Colonic mucosa (tissue), 4 donors: ENCODE measurements at regions of chr21 and their contacts with region 1.

Region 1: DNA sequence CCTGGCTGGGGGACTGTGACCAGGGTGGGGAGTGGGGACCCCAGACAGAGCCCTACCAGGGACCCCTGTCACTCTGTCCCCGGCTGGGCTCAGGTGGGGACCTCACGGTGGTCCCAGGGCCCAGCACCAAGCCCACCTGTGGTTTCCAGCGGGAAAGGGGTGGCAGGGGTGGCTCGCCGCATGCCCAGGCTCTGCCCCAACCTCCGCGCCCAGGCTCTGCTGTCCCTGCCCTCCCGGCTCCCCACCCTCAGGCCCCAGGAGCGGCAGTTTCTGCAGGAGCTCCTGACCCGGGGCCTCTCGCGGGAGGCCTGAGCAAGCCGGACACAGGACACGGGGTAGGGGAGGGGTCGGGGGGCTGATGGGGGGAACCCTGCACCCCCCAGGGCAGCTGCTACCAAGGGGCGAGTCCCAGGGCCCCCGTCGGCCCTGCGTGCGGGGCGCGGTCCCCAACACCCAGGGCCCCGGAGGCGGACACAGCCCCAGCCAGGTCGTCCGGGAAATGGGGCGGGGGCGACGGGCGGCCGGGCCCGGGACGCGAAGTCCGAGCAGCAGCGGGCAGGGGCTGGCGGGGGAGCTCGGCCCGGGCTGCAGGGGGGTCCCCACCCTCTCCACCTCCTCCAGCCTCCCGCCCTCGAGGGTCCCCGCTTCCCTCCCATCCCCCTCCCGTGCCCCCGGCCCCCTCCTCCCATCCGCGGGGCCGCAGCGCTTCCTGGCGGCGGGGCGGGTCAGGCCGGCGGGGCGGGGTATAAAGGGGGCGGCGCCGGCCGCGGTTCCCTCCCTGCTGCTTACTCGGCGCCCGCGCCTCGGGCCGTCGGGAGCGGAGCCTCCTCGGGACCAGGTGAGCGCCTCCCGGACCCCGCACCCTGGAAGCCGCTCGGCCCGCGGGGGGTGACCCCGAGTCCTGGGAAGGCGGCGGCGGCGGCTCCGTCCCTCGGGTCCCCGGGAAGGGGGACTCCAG is at the start of gene COL6A2:
- DNase-seq: peak; percentile 40
- H3K4me3 ChIP-seq: peak within 1 kb of the TSS; percentile 45
- H3K27ac ChIP-seq: peak within 1 kb of the TSS; percentile 75
- H3K4me1 ChIP-seq: no peaks in the 10 kb centered on the region
- H3K27me3 ChIP-seq: peaks cover 22% of the 10 kb centered on the region
- CTCF ChIP-seq: peak; percentile 16
- total RNA-seq, gene COL6A2: 55.7 to 190 TPM

Region 2: GRCh38 chr21:45880097-45881068 is 217.2 kb before region 1 on chr21:
- intact Hi-C with region 1: no loop called
- DNase-seq: peak; percentile 68
- H3K4me3 ChIP-seq: no peak overlapping the region
- H3K27ac ChIP-seq: no peak overlapping the region
- H3K4me1 ChIP-seq: no peaks in the 10 kb centered on the region
- H3K27me3 ChIP-seq: no peaks in the 10 kb centered on the region
- CTCF ChIP-seq: peak; percentile 66

Region 3: GRCh38 chr21:45981151-45982089 is 116.2 kb before region 1 on chr21 and contains the start of gene COL6A1:
- intact Hi-C with region 1: loop called (anchors 5 kb)
- DNase-seq: peak; percentile 61
- H3K4me3 ChIP-seq: peak within 1 kb of the TSS; percentile 69
- H3K27ac ChIP-seq: peak within 1 kb of the TSS; percentile 77
- H3K4me1 ChIP-seq: no peaks in the 10 kb centered on the region
- H3K27me3 ChIP-seq: peaks cover 19% of the 10 kb centered on the region
- CTCF ChIP-seq: no peak
- total RNA-seq, gene COL6A1: 39.8 to 131 TPM

Region 4: DNA sequence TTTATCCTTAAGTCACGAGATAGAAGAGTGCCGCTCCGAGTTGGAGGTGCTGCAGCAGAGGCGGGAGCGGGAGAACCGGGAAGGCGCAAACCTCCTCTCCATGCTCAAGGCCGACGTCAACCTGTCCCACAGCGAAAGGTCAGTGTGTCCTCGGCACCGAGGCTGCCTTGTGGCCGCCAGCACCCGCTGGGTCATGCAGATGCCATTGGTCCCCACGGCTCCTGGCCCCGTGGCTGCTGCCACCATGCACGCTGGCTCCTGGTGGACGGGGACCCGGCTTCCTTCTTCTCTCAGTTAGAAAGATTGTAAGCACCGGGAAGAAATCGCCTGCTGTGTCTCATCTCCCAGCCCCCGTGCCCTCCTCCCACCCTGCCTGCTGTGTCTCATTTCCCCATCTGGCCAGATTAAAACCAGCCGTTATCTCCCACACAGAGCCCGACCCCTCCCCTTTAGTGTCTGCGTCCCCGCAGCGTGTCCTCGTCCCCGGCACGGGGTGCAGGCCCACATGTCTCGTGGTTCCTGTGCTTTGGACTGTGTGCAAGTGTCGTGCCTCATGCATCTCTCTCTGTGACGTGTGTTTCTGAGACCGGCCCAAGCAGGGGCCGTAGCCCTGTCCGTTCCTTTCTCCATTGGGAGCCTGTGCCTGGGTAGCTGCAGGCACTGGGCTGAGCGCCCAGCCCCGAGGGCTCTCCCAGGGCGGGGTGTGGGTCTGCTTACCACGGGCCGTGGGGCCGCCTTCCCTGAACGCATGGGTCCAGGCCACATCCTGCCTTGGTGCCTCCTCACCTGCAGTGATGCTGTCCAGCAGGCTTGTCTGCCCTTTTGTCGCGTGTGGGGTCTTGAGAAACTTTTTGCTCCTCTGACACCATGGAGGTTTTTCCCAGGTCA is 288.5 kb after region 1 on chr21:
- intact Hi-C with region 1: no loop called
- DNase-seq: no peak
- H3K4me3 ChIP-seq: no peak overlapping the region
- H3K27ac ChIP-seq: no peak overlapping the region
- H3K4me1 ChIP-seq: no peaks in the 10 kb centered on the region
- H3K27me3 ChIP-seq: no peaks in the 10 kb centered on the region
- CTCF ChIP-seq: no peak